ENCODE measurements at regions of chr18 and their contacts with region 1.

Region 1: DNA sequence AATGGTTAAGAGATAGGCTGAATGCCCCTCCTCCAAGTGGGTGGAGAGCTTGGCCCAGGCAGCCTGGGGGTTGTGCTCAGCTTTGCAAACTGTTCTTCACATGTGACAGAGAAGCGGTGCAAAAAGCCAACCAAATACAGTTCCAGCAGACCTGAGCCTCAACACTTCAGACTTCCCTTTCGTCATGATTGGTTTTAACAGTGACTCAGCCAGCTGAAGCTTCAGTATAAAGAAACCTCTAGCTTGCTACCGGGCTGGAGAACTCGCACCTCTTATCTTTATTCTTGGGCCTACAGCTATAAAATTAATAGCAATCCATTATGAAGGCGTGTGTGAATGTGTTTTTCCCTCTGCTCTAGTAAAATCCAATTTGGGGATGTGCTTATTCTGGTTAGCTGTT is 20.0 kb downstream of the SETBP1 start:
- DNase-seq: no peak
- ATAC-seq: peak; percentile 84
- H3K4me3 ChIP-seq: no peak overlapping the region
- H3K27ac ChIP-seq: no peak overlapping the region
- H3K4me1 ChIP-seq: peaks cover 2% of the 10 kb centered on the region
- H3K27me3 ChIP-seq: no peaks in the 10 kb centered on the region
- CTCF ChIP-seq: no peak
- EP300 ChIP-seq: no peak
- POLR2A ChIP-seq: no peak
- RAD21 ChIP-seq: no peak

Region 2: GRCh38 chr18:43627848-43628526 is 1072.7 kb before region 1 on chr18:
- CTCF ChIA-PET with region 1: no interaction called
- POLR2A ChIA-PET with region 1: no interaction called
- RAD21 ChIA-PET with region 1: no interaction called
- SMC1A ChIA-PET with region 1: no interaction called
- in situ Hi-C with region 1: no loop called
- intact Hi-C with region 1: no loop called
- DNase-seq: no peak
- ATAC-seq: no peak
- H3K4me3 ChIP-seq: no peak overlapping the region
- H3K27ac ChIP-seq: no peak overlapping the region
- H3K4me1 ChIP-seq: no peaks in the 10 kb centered on the region
- H3K27me3 ChIP-seq: no peaks in the 10 kb centered on the region; a peak in 1 of 4 replicates
- CTCF ChIP-seq: no peak
- EP300 ChIP-seq: no peak
- POLR2A ChIP-seq: no peak
- RAD21 ChIP-seq: no peak

Region 3: GRCh38 chr18:44654555-44654954 is 46.1 kb before region 1 on chr18:
- CTCF ChIA-PET with region 1: no interaction called
- POLR2A ChIA-PET with region 1: no interaction called
- RAD21 ChIA-PET with region 1: no interaction called
- SMC1A ChIA-PET with region 1: no interaction called
- in situ Hi-C with region 1: no loop called
- intact Hi-C with region 1: no loop called
- DNase-seq: no peak
- ATAC-seq: no peak
- H3K4me3 ChIP-seq: no peak overlapping the region
- H3K27ac ChIP-seq: no peak overlapping the region
- H3K4me1 ChIP-seq: no peaks in the 10 kb centered on the region
- H3K27me3 ChIP-seq: no peaks in the 10 kb centered on the region
- CTCF ChIP-seq: no peak
- EP300 ChIP-seq: no peak
- POLR2A ChIP-seq: no peak
- RAD21 ChIP-seq: no peak

Region 4: DNA sequence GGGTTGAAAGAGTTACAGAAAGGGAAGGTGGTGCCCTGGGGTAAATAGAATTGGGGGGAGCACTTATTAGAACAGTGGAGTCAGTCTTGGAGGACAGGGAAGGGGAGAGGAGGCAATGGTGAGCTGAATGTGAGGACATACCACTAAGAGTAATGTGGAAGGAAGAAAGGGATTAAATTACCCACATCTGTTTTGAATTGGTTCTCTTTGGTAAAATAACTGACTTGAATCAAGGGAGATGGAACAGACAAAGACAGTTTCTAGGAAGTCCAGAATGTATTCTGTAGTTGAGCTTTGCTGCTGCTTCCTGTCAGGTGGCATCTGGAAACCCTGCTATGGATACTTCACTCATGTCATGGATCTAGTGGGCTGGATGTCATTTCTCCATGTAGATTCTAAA is 13.2 kb before region 1 on chr18:
- CTCF ChIA-PET with region 1: interaction called, 25 read pairs
- POLR2A ChIA-PET with region 1: interaction called, 5 read pairs
- RAD21 ChIA-PET with region 1: interaction called, 13 read pairs
- SMC1A ChIA-PET with region 1: interaction called, 35 read pairs
- in situ Hi-C with region 1: no loop called
- intact Hi-C with region 1: loop called (anchors 2 kb)
- DNase-seq: no peak
- ATAC-seq: no peak
- H3K4me3 ChIP-seq: no peak overlapping the region
- H3K27ac ChIP-seq: no peak overlapping the region
- H3K4me1 ChIP-seq: peaks cover 12% of the 10 kb centered on the region
- H3K27me3 ChIP-seq: 0 out of 4 replicates have a peak, but pooled peaks cover 0 to 3% of the 10 kb centered on the region in 2 experiments
- CTCF ChIP-seq: no peak
- EP300 ChIP-seq: no peak
- POLR2A ChIP-seq: no peak
- RAD21 ChIP-seq: no peak

Measured in GM12878 (cell line).